Mammary epithelial cell (primary cell): ENCODE measurements at regions of chr17 and their contacts with region 1.

Region 1: DNA sequence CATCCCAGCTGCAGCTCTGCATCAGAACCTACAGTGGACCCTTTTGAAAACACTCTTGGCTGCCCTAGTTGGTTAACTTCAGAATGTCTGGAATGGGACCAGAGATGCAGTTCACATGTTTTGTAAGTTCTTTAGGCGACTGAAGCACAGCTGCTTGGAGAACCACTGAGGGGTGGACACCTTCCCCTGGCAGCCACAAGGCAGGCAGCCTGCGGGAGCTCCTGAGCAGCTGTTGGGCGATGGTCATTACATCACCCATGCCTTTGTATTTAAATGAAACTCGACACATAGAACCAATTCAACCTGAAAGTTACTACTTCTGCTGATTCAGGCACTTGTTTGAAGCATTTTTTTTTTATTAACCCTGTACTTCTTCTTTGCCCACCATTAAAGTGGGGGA is 151.5 kb downstream of the LGALS9B start:
- DNase-seq: no peak
- H3K4me3 ChIP-seq: no peak overlapping the region
- H3K27ac ChIP-seq: no peak overlapping the region
- H3K4me1 ChIP-seq: no peaks in the 10 kb centered on the region
- H3K27me3 ChIP-seq: no peaks in the 10 kb centered on the region
- CTCF ChIP-seq: no peak

Region 2: GRCh38 chr17:20121359-20122253 is 194.2 kb before region 1 on chr17:
- CTCF ChIA-PET with region 1: no interaction called
- dilution Hi-C with region 1: no loop called
- in situ Hi-C with region 1: loop called in 1 of 2 experiments (anchors 10 kb)
- intact Hi-C with region 1: no loop called
- DNase-seq: peak; percentile 34
- H3K4me3 ChIP-seq: no peak overlapping the region
- H3K27ac ChIP-seq: no peak overlapping the region
- H3K4me1 ChIP-seq: peaks cover 5% of the 10 kb centered on the region
- H3K27me3 ChIP-seq: no peaks in the 10 kb centered on the region
- CTCF ChIP-seq: peak; percentile 81 to 94

Region 3: DNA sequence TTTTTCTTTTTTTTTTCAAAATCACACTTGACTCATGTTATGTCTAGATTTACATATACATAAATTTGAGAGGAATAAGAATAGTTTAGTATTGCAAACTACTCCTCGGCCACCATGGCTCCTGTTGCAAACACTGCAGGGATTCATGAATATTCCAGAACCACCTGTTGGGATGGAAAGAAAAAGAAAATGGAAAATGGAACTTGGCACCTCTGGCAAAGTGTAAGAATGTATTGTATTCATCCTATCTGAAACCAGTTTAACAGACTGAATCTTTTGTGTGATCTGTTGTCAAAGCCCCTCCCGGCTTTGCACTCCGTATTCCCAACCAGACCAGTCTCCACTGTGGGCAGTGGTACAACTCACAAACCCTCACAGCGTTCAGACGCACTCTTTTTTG is 182.3 kb before region 1 on chr17:
- CTCF ChIA-PET with region 1: no interaction called
- dilution Hi-C with region 1: no loop called
- in situ Hi-C with region 1: loop called in 1 of 2 experiments (anchors 10 kb)
- intact Hi-C with region 1: no loop called
- DNase-seq: no peak
- H3K4me3 ChIP-seq: no peak overlapping the region
- H3K27ac ChIP-seq: no peak overlapping the region
- H3K4me1 ChIP-seq: no peaks in the 10 kb centered on the region
- H3K27me3 ChIP-seq: no peaks in the 10 kb centered on the region
- CTCF ChIP-seq: no peak